K562 (cell line): ENCODE measurements at regions of chr21 and their contacts with region 1.

Region 1: DNA sequence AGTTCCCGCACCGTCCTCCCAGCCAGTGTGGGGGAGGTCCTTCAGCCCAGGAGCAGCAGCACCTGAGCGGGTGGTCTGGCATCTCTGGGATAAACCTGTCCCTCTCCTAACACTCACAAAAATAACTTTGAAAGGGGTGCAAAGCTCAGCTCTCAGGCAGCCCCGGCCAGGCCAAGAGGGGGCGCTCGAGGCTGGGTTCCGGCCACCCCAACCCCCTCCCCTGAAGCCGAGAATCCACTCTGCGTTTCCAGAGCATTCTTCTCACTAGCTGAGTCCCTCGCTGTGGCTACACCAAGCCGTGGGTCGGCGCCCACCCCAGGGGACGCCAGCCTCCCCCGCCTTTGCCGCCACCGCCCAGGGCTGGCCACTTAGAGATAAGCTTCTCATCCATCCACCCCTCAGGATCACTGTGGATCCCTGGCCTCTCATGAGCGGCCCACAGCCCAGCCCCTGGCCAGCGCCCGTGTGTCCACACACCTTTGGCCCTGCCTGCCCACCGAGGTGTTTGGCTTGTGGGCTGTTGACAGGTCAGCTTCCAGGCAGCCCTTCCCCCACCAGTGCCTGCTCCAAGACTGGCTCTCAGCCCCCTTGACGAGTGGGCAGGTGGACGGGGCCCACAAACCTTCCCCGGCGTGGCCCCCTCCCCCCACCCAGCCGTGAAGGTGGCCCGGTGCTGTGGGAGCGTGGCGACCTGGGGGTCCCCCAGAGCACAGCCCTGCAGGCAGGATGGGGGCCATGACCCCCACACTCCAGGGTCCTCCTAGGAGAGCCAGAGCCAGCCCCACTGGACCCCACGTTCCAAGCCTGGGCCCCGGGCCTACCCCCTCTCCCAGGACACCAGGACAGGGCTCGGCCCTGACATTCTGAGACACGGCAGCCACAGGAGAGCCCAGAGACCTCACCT is 1.9 kb downstream of the FTCD start:
- DNase-seq: peak; percentile 92 to 96 (median 96)
- ATAC-seq: peak; percentile 94
- H3K4me3 ChIP-seq: peak overlapping the region; percentile 14; the same call in 1 of the 2 replicates
- H3K27ac ChIP-seq: peak overlapping the region; percentile 74
- H3K4me1 ChIP-seq: peaks cover 15 to 78% of the 10 kb centered on the region in 2 experiments
- H3K27me3 ChIP-seq: no peaks in the 10 kb centered on the region
- CTCF ChIP-seq: peak; percentile 88 to 98 (median 93)
- EP300 ChIP-seq: peak; percentile 63; the same call in 1 of the 2 replicates
- POLR2A ChIP-seq: 0 out of 2 replicates have a peak, but pooled peaks have one; percentile 62
- RAD21 ChIP-seq: peak; percentile 71 to 80

Region 2: GRCh38 chr21:46184625-46185555 is 31.4 kb after region 1 on chr21:
- CTCF ChIA-PET with region 1: no interaction called
- POLR2A ChIA-PET with region 1: no interaction called
- in situ Hi-C with region 1: no loop called
- intact Hi-C with region 1: loop called (anchors 2 kb)
- DNase-seq: peak; percentile 75 to 88 (median 86)
- ATAC-seq: peak; percentile 53
- H3K4me3 ChIP-seq: peak overlapping the region; percentile 88
- H3K27ac ChIP-seq: peak overlapping the region; percentile 67
- H3K4me1 ChIP-seq: peaks cover 64 to 85% of the 10 kb centered on the region in 2 experiments
- H3K27me3 ChIP-seq: no peaks in the 10 kb centered on the region
- CTCF ChIP-seq: no peak
- EP300 ChIP-seq: no peak; the same call in 1 of the 2 replicates
- POLR2A ChIP-seq: no peak; the same call in 1 of the 2 replicates
- RAD21 ChIP-seq: no peak

Region 3: GRCh38 chr21:46210378-46211136 is 57.1 kb after region 1 on chr21:
- CTCF ChIA-PET with region 1: interaction called, 3 read pairs
- POLR2A ChIA-PET with region 1: interaction called, 3 read pairs
- in situ Hi-C with region 1: no loop called
- intact Hi-C with region 1: loop called (anchors 2 kb)
- DNase-seq: peak in 1 of 4 experiments; percentile 42
- ATAC-seq: peak; percentile 73
- H3K4me3 ChIP-seq: no peak overlapping the region
- H3K27ac ChIP-seq: no peak overlapping the region
- H3K4me1 ChIP-seq: peaks cover 0 to 32% of the 10 kb centered on the region in 2 experiments; a peak in 1 of 5 replicates
- H3K27me3 ChIP-seq: no peaks in the 10 kb centered on the region
- CTCF ChIP-seq: peak; percentile 44 to 53 (median 47); a peak in 4 of 6 replicates
- EP300 ChIP-seq: no peak
- POLR2A ChIP-seq: no peak
- RAD21 ChIP-seq: peak in 1 of 2 experiments; percentile 48; a peak in 2 of 4 replicates

Region 4: DNA sequence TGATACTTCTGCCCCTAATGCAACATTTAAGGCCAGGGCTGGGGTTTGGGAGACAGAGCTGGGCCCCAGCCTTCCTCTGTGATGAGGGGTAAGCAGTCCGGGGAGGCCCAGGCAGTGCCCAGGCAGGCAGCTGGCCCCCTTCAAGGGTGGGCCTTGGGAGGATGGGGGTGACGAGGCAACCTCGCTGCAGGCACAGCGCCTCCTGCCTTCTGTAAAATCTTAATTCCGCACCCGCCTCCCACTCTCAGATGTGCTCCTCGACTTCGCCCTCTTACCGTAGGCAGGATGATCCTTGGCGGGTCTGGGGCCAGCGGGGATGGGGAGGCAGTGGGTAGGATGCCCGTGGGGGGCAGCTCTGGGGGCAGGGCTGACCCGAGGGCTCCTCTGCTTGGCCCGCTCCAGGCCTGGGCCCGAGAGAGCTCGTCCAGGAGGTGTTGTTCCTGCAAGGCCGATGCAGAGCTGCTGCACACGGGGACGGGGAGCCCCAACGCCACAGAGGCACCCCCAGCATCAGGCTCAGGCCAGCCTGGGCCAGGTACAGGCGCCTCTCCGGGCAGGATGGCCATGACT is 161.0 kb after region 1 on chr21:
- CTCF ChIA-PET with region 1: no interaction called
- POLR2A ChIA-PET with region 1: no interaction called
- in situ Hi-C with region 1: no loop called
- intact Hi-C with region 1: no loop called
- DNase-seq: no peak
- ATAC-seq: no peak
- H3K4me3 ChIP-seq: no peak overlapping the region
- H3K27ac ChIP-seq: no peak overlapping the region
- H3K4me1 ChIP-seq: peaks cover 3 to 33% of the 10 kb centered on the region in 2 experiments; a peak in 4 of 5 replicates
- H3K27me3 ChIP-seq: no peaks in the 10 kb centered on the region
- CTCF ChIP-seq: no peak; a peak in 1 of 6 replicates
- EP300 ChIP-seq: no peak
- POLR2A ChIP-seq: no peak
- RAD21 ChIP-seq: no peak